Right cardiac atrium (tissue), 5 donors: ENCODE measurements at regions of chr2 and their contacts with region 1.

Region 1: DNA sequence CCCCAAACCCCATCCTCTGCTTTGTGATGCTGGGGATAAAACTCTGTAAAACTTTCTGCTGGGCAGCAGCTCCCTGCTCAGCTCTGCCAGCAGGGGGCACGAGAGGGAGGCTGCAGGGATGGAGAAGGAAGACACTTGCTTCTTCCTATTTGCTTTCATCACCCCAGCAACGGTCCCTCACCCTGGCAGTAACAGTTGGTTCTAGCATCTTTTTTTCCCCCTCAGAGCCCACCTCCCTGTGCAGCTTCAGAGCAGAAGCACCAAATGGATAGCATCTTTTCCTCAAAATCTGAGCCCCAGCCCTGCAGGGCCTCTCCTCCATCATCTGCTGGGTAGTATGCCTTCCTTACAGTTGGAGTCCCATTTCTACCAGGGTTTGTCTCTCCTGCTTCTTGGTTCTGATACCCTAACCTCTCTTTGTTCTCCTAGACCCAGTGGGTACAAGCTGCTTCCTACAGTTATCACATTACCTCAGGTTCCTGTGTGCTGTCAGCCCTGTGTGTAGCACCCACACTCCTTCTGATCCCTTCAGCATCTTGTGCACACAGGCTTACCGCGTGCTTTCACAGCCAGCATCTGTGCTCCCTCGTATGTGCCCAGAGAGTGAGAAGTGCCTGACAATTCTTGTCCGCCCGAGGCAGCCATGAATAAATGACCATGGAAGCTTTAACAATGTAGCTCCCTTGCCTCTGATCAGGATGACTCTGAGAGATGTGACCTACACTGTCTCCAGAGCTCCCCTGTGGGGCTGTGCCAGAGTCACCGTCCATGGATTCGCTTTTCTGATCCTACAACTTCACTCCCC is 14.5 kb downstream of the CKAP2L start:
- DNase-seq: peak; percentile 66 to 88 (median 84)
- ATAC-seq: peak; percentile 54 to 75
- H3K4me3 ChIP-seq: no peak overlapping the region
- H3K27ac ChIP-seq: no peak overlapping the region
- H3K4me1 ChIP-seq: no peaks in the 10 kb centered on the region
- H3K27me3 ChIP-seq: no peaks in the 10 kb centered on the region

Region 2: GRCh38 chr2:112839407-112840067 is 89.6 kb after region 1 on chr2:
- intact Hi-C with region 1: no loop called
- DNase-seq: peak in 1 of 3 donors; percentile 23
- ATAC-seq: peak; percentile 34 to 55
- H3K4me3 ChIP-seq: no peak overlapping the region
- H3K27ac ChIP-seq: no peak overlapping the region
- H3K4me1 ChIP-seq: no peaks in the 10 kb centered on the region
- H3K27me3 ChIP-seq: no peaks in the 10 kb centered on the region

Region 3: GRCh38 chr2:112884869-112885505 is 135.0 kb after region 1 on chr2:
- intact Hi-C with region 1: loop called in 2 of 4 experiments (anchors 5 to 10 kb)
- DNase-seq: peak in 2 of 3 donors; percentile 20 to 68
- ATAC-seq: peak in 1 of 2 donors; percentile 61
- H3K4me3 ChIP-seq: no peak overlapping the region
- H3K27ac ChIP-seq: no peak overlapping the region
- H3K4me1 ChIP-seq: no peaks in the 10 kb centered on the region
- H3K27me3 ChIP-seq: no peaks in the 10 kb centered on the region

Region 4: DNA sequence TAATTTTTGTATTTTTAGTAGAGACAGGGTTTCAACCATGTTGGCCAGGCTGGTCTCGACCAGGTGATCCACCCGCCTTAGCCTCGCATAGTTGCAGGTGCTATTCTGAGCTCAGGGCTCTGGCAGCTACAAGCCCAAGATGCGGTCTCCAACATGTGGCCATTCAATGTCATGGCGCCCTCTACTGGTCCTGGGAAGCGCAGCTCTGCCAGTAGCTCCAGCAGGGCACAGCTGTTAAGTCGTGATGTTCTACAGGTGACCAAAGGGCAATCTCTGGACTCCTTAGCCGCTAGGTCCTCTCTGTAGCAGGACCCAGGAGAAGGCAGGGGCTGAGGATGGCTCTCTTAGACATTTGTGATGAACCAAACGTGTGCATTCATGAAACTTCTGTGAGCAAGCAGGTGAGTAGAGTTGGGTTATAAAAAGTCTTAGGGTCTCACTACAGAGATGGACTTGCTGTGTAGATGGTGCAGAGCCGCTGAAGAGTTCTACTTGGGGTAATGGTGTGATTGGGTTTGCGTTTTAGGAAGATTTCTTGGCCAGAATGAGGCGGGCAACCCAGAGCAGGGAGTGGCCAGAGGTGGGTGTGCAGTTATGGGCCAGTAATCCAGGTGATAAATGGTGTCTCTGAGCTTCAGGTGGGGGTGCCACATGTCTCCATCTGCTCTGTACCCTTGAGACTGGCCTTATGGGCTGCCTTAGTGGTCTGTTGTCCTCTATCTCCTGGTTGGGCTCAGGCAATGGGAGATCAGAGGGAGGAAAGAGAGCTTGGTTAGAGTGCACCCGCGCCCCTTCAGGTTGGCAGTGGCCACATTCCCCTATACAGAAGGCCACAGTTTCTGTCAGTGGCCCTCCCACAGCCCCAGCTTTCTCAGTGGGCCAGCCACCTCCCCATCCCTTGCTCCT is 192.0 kb after region 1 on chr2:
- intact Hi-C with region 1: loop called in 3 of 4 experiments (anchors 5 kb)
- DNase-seq: peak; percentile 49 to 73 (median 64)
- ATAC-seq: peak; percentile 38 to 78
- H3K4me3 ChIP-seq: no peak overlapping the region
- H3K27ac ChIP-seq: no peak overlapping the region
- H3K4me1 ChIP-seq: no peaks in the 10 kb centered on the region
- H3K27me3 ChIP-seq: no peaks in the 10 kb centered on the region

Region 5: DNA sequence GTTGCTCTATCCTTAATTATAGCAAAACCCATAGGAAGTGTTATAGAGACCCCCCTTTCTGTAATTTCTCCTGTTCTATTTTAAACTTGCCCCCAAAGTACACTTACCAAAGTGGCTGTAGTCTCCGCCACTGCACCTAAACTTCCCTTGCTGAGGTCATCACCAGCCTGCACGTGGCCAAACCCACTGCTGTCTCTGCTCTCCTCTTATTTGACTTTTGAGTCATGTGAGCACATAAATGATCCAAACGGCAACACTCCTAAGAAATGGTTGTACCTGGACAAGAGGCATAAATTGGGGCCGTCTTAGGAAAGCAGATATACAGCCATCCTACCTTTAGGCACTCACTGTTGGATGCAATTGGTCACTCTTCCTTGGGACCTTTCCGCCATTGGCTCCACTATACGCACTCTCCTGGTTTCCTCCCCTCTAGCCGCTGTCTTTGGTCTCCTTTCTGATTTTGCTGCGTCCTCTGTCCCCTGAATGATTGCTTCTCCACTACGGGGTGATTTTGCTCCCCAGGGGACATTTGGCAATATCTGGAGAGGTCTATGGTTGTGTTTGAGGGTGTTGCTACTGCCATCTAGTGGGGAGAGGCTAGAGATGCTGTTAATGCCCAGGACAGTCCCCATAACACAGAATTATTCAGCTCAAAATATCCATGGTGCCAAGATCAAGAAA is 208.6 kb after region 1 on chr2:
- intact Hi-C with region 1: loop called in 1 of 4 experiments (anchors 5 kb)
- DNase-seq: peak in 1 of 3 donors; percentile 16
- ATAC-seq: peak; percentile 69 to 82
- H3K4me3 ChIP-seq: no peak overlapping the region
- H3K27ac ChIP-seq: no peak overlapping the region
- H3K4me1 ChIP-seq: no peaks in the 10 kb centered on the region
- H3K27me3 ChIP-seq: no peaks in the 10 kb centered on the region

Region 6: GRCh38 chr2:113980946-113981345 is 1231.0 kb after region 1 on chr2:
- intact Hi-C with region 1: no loop called
- DNase-seq: peak; percentile 35 to 61 (median 43)
- ATAC-seq: peak; percentile 80 to 84
- H3K4me3 ChIP-seq: no peak overlapping the region
- H3K27ac ChIP-seq: no peak overlapping the region
- H3K4me1 ChIP-seq: no peaks in the 10 kb centered on the region
- H3K27me3 ChIP-seq: no peaks in the 10 kb centered on the region